ENCODE measurements at regions of chr7 and their contacts with region 1.

Region 1: DNA sequence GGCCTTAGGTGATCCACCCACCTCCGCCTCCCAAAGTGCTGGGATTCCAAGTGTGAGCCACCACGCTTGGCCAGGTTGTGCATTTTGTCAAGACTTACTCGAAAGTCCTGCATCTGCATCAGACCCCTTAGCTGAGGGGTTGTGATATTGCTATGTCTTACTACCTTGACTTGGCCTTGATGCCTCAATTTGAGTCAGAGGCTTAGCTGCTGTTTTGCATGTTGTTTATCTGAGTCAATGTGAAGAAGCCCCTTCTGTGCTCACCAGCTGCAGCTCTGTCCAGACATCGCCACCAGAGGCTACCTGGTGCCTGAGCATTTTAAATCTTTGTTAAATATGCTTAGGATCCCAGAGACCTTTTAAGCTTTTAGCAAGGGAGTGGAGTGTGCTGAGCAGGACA is 18.1 kb downstream of the UBE2D4 start:
- H3K4me3 ChIP-seq: no peak overlapping the region
- H3K27ac ChIP-seq: no peak overlapping the region
- H3K4me1 ChIP-seq: no peaks in the 10 kb centered on the region
- CTCF ChIP-seq: no peak

Region 2: DNA sequence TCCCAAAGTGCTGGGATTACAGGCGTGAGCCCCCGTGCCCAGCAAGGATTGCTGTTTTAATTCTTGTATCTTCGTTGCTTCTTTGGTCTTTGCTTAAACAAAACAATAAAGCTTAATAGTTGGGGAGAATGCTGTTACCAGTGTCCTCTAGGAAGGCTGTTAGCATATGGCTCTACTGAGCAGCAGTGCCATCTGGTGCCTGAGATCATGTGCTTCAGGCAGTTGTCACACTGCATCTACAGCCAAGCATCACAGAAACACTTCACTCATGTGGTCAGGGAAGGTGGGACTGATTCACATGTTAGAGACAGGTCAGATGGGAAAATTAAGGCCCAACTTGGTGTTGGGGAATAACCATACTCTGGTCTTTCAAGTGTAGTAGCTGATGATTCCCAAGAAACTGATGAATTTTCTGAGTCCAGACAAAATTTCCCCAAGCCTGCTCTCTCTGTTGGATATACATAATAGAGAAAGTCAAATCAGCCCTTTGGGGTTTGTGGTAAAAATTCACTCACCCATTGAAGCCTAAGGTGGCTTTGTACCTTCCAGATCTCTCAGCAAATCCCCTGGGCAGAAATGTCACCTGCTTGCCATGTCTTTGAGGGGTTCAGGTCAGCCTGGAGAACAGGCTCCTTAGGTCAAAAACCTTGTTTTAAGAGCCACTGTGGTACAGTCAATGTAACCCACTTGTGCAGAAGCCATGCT is 10.4 kb after region 1 on chr7:
- CTCF ChIA-PET with region 1: interaction called, 12 read pairs
- POLR2A ChIA-PET with region 1: interaction called, 4 read pairs
- H3K4me3 ChIP-seq: no peak overlapping the region
- H3K27ac ChIP-seq: no peak overlapping the region
- H3K4me1 ChIP-seq: no peaks in the 10 kb centered on the region
- CTCF ChIP-seq: peak; percentile 74

Measured in HEK293 (cell line).